Activated T-helper 2 cell treated with anti-CD3 and anti-CD28 coated beads, Interferon-gamma antibody, Interleukin-2, Interleukin-4, amounts not matched to agents 10 μg/mL and 5 μg/mL and 100 μg/mL, durations not matched to agents 14 hours and 24 hours and 36 hours (primary cell): ENCODE measurements at regions of chr13 and their contacts with region 1.

Region 1: GRCh38 chr13:48892053-48892690 is 83.5 kb upstream of the FNDC3A start:
- DNase-seq: no peak
- H3K4me3 Mint-ChIP-seq: no peak overlapping the region
- H3K27ac Mint-ChIP-seq: no peak overlapping the region
- H3K4me1 Mint-ChIP-seq: peaks cover 19% of the 10 kb centered on the region
- H3K27me3 Mint-ChIP-seq: no peaks in the 10 kb centered on the region

Region 2: DNA sequence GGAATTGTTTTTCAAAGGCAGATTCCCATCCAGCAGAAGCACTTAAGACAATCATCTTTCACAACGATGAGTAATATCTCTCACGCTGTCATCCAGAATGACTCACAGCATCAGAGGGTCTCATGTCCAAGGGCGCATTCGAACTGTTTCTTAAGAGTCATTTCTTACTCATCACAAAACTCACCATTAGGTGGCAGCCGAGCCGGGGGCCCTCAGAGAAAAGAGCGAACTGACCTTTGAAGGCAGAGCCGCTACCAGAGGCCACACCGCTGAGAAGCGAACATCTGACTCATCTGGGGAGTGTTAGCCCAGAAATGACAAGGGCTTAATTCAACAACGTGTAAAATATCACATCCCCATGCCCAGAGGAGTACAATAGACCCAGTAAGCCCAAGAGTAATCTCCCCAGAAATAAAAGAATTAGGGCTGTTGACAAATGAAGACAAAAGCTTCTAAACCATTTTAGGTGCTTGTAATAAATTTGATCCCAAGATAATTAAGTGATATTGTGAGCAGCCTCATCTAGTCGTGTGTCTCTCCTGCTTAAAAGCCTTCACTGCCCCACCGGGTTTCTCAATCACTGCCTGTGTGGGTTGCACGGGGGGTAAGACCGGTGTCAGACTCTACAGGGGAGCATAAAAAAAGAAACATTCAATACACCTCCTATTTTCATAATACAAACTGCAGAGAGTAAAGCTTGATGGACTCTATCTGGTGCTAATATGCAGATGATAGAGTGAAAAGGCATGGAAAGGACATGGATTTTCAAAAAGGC is 142.3 kb before region 1 on chr13:
- intact Hi-C with region 1: loop called (anchors 1 kb)
- DNase-seq: peak; percentile 46
- H3K4me3 Mint-ChIP-seq: no peak overlapping the region
- H3K27ac Mint-ChIP-seq: peak overlapping the region; percentile 70
- H3K4me1 Mint-ChIP-seq: peaks cover 13% of the 10 kb centered on the region
- H3K27me3 Mint-ChIP-seq: peaks cover 2% of the 10 kb centered on the region

Region 3: GRCh38 chr13:48804821-48805601 is 87.2 kb before region 1 on chr13:
- intact Hi-C with region 1: loop called (anchors 1 kb)
- DNase-seq: no peak
- H3K4me3 Mint-ChIP-seq: peak overlapping the region; percentile 15
- H3K27ac Mint-ChIP-seq: peak overlapping the region; percentile 63
- H3K4me1 Mint-ChIP-seq: peaks cover 25% of the 10 kb centered on the region
- H3K27me3 Mint-ChIP-seq: peaks cover 14% of the 10 kb centered on the region

Region 4: DNA sequence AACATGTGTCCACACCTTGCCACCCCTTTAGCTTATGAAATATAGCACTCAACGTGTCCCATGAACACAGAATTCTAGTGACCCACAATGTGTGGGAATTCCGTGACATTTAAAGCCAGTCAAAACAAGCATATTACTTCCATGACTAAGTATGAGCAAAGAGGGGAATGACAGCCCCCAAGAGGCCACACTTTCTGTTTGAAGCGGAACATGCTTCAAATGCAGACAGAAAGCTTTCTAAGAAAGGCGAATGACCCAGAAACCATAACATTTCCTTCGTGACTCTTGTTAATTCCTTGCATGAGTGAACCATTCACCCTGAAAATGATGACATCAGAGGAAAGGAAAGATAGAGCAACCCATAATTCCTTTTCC is 38.5 kb before region 1 on chr13:
- intact Hi-C with region 1: loop called (anchors 5 kb)
- DNase-seq: no peak
- H3K4me3 Mint-ChIP-seq: no peak overlapping the region
- H3K27ac Mint-ChIP-seq: peak overlapping the region; percentile 20
- H3K4me1 Mint-ChIP-seq: peaks cover 30% of the 10 kb centered on the region
- H3K27me3 Mint-ChIP-seq: peaks cover 23% of the 10 kb centered on the region

Region 5: GRCh38 chr13:48879432-48879831 is 12.7 kb before region 1 on chr13:
- intact Hi-C with region 1: loop called (anchors 1 kb)
- DNase-seq: no peak
- H3K4me3 Mint-ChIP-seq: no peak overlapping the region
- H3K27ac Mint-ChIP-seq: no peak overlapping the region
- H3K4me1 Mint-ChIP-seq: peaks cover 35% of the 10 kb centered on the region
- H3K27me3 Mint-ChIP-seq: peaks cover 9% of the 10 kb centered on the region

Region 6: GRCh38 chr13:49247643-49248621 is 355.8 kb after region 1 on chr13 and contains the start of gene CDADC1:
- intact Hi-C with region 1: loop called (anchors 10 kb)
- DNase-seq: peak; percentile 88
- H3K4me3 Mint-ChIP-seq: peak within 1 kb of the TSS; percentile 93
- H3K27ac Mint-ChIP-seq: peak within 1 kb of the TSS; percentile 96
- H3K4me1 Mint-ChIP-seq: peaks cover 26% of the 10 kb centered on the region
- H3K27me3 Mint-ChIP-seq: peaks cover 11% of the 10 kb centered on the region
- total RNA-seq, gene CDADC1: 7.4 and 8.6 TPM in 2 replicates